Heart left ventricle (tissue), 16 donors: ENCODE measurements at regions of chr19 and their contacts with region 1.

Region 1: GRCh38 chr19:53659292-53659691 is 27.5 kb downstream of the DPRX start:
- DNase-seq: peak in 4 of 5 donors; percentile 30 to 54 (median 36)
- ATAC-seq: peak in 3 of 4 donors; percentile 39 to 90 (median 57)
- H3K4me3 ChIP-seq: no peak overlapping the region
- H3K27ac ChIP-seq: peak overlapping the region in 5 of 12 donors; percentile 31 to 59 (median 53)
- H3K4me1 ChIP-seq: peaks cover 0 to 8% (median 0%) of the 10 kb centered on the region in 12 donors
- H3K27me3 ChIP-seq: peaks cover 0 to 7% (median 0%) of the 10 kb centered on the region in 9 donors
- CTCF ChIP-seq: peak; percentile 19 to 54 (median 42)
- POLR2A ChIP-seq: no peak

Region 2: DNA sequence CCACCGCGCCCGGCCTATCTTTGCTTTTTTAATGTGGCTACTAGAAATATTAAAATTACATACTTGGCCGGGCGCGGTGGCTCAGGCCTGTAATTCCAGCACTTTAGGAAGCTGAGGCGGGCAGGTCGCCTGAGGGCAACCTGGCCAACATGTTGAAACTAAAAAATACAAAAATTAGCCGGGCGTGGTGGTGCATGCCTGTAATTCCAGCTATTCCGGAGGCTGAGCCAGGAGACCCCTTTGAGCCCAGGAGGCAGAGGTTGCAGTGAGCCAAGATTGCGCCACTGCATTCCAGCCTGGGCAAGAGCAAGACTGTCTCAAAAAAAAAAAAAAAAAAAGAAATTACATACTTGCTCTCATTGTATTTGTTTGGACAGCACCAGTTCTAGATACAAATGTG is 62.3 kb before region 1 on chr19:
- intact Hi-C with region 1: loop called in 3 of 10 experiments (anchors 5 kb)
- DNase-seq: no peak
- ATAC-seq: no peak
- H3K4me3 ChIP-seq: no peak overlapping the region
- H3K27ac ChIP-seq: no peak overlapping the region
- H3K4me1 ChIP-seq: peaks cover 0 to 4% (median 0%) of the 10 kb centered on the region in 12 donors
- H3K27me3 ChIP-seq: no peaks in the 10 kb centered on the region
- CTCF ChIP-seq: no peak
- POLR2A ChIP-seq: no peak

Region 3: DNA sequence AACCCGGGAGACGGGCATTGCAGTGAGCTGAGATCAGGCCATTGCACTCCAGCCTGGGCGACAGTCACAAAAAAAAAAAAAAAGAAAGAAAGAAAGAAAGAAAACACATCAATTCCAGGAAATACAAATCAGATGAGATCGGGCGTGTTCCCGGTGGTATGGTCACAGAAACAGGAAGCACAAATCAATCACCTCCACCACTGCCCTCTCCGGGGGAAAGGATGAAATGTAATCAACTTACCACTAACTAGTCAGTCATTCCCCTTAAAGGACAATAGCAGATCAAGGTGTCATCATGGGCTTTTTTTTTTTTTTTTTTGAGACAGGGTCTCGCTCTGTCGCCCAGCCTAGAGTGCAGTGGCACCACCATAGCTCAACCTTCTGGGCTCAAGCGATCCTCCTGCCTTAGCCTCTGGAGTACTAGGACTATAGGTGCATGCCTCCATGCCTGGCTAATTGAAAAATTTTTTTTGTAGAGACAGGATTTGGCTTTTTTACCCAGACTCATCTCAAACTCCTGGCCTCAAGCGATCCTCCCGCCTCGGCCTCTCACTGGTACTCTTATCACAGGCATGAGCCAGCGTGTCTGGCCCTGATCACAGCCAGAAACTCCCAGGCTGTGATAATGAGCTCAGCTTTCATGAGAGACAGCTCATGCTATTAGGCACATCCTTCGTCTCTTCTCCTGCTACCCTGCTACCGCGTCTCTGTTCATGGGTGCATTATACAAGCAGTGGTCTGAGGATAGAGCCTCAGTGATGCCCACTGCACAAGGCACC is 34.3 kb before region 1 on chr19:
- intact Hi-C with region 1: loop called in 1 of 10 experiments (anchors 2 kb)
- DNase-seq: no peak
- ATAC-seq: peak in 1 of 4 donors; percentile 57
- H3K4me3 ChIP-seq: no peak overlapping the region
- H3K27ac ChIP-seq: peak overlapping the region in 6 of 12 donors; percentile 18 to 49 (median 40)
- H3K4me1 ChIP-seq: peaks cover 0 to 16% (median 0%) of the 10 kb centered on the region in 12 donors
- H3K27me3 ChIP-seq: no peaks in the 10 kb centered on the region
- CTCF ChIP-seq: no peak
- POLR2A ChIP-seq: no peak